ENCODE measurements at regions of chr22 and their contacts with region 1.

Region 1: GRCh38 chr22:21735200-21736076 is at the start of gene YPEL1:
- DNase-seq: peak; percentile 98
- ATAC-seq: peak; percentile 86
- H3K4me3 ChIP-seq: peak within 1 kb of the TSS; percentile 76 to 94 (median 93)
- H3K4me3 Mint-ChIP-seq: peak within 1 kb of the TSS; percentile 88
- H3K27ac ChIP-seq: peak within 1 kb of the TSS; percentile 93 to 94
- H3K27ac Mint-ChIP-seq: peak within 1 kb of the TSS; percentile 97
- H3K4me1 ChIP-seq: peaks cover 21 to 47% of the 10 kb centered on the region in 2 donors
- H3K4me1 Mint-ChIP-seq: peaks cover 40% of the 10 kb centered on the region
- H3K27me3 ChIP-seq: no peaks in the 10 kb centered on the region
- H3K27me3 Mint-ChIP-seq: no peaks in the 10 kb centered on the region
- CTCF ChIP-seq: no peak
- total RNA-seq, gene YPEL1: 14.9 and 17.3 TPM in 2 replicates

Region 2: GRCh38 chr22:20858615-20859416 is 876.6 kb before region 1 on chr22 and contains the starts of genes PI4KA and SNAP29:
- CTCF ChIA-PET with region 1: no interaction called
- POLR2A ChIA-PET with region 1: no interaction called
- intact Hi-C with region 1: loop called (anchors 5 kb)
- DNase-seq: peak; percentile 99
- ATAC-seq: peak; percentile 92
- H3K4me3 ChIP-seq: peak within 1 kb of the TSS; percentile 80 to 94 (median 87)
- H3K4me3 Mint-ChIP-seq: peak within 1 kb of the TSS; percentile 92
- H3K27ac ChIP-seq: peak within 1 kb of the TSS; percentile 76 to 85
- H3K27ac Mint-ChIP-seq: peak within 1 kb of the TSS; percentile 94
- H3K4me1 ChIP-seq: peaks cover 18 to 30% of the 10 kb centered on the region in 2 donors
- H3K4me1 Mint-ChIP-seq: peaks cover 51% of the 10 kb centered on the region
- H3K27me3 ChIP-seq: no peaks in the 10 kb centered on the region
- H3K27me3 Mint-ChIP-seq: no peaks in the 10 kb centered on the region
- CTCF ChIP-seq: no peak
- total RNA-seq, gene PI4KA: 149 and 156 TPM in 2 replicates
- total RNA-seq, gene SNAP29: 17.4 and 18.8 TPM in 2 replicates

Region 3: GRCh38 chr22:21690401-21690801 is 45.0 kb before region 1 on chr22:
- CTCF ChIA-PET with region 1: no interaction called
- POLR2A ChIA-PET with region 1: interaction called, 10 read pairs
- intact Hi-C with region 1: no loop called
- DNase-seq: no peak
- ATAC-seq: no peak
- H3K4me3 ChIP-seq: no peak overlapping the region
- H3K4me3 Mint-ChIP-seq: no peak overlapping the region
- H3K27ac ChIP-seq: peak overlapping the region in 1 of 2 donors; percentile 58
- H3K27ac Mint-ChIP-seq: peak overlapping the region; percentile 26
- H3K4me1 ChIP-seq: peaks cover 0 to 7% of the 10 kb centered on the region in 2 donors
- H3K4me1 Mint-ChIP-seq: peaks cover 13% of the 10 kb centered on the region
- H3K27me3 ChIP-seq: no peaks in the 10 kb centered on the region
- H3K27me3 Mint-ChIP-seq: no peaks in the 10 kb centered on the region
- CTCF ChIP-seq: no peak

Region 4: DNA sequence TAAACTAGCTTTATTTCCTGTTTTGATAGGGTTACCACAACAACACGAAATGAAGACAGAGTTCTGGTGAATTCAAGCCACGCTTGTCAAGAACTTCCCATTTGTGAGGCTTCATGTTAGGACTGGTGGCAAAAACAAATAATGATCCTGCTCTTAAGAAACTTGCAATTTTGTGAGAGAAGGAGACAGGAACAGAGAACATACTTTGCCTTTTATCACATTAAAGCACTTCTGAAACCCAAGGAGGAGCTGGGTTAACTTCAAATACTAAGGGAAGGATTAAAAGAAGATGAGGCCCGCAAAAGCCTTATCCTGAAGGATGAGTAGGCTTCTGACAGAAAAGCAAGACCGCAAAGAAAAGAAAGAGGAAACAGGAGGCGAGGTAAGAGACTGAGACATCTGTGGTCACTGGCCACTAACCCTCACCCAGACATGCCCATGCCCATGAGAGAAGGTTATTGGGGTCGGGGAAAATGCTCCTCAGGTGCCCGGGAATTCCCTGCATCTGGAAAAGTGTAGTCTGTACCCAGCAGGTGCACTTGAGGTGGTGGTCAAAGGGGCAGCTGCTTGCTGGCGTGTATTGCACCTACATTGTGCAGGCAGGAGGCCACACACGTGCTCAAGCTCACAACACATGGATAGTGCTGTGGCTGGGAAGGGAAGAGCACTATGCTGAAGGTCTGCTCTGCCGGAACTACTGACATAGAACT is 81.5 kb after region 1 on chr22:
- CTCF ChIA-PET with region 1: no interaction called
- POLR2A ChIA-PET with region 1: no interaction called
- intact Hi-C with region 1: loop called (anchors 1 kb)
- DNase-seq: peak; percentile 92
- ATAC-seq: peak; percentile 88
- H3K4me3 ChIP-seq: peak overlapping the region; percentile 12 to 54 (median 48)
- H3K4me3 Mint-ChIP-seq: peak overlapping the region; percentile 91
- H3K27ac ChIP-seq: peak overlapping the region; percentile 89 to 96
- H3K27ac Mint-ChIP-seq: peak overlapping the region; percentile 97
- H3K4me1 ChIP-seq: peaks cover 57 to 62% of the 10 kb centered on the region in 2 donors
- H3K4me1 Mint-ChIP-seq: peaks cover 73% of the 10 kb centered on the region
- H3K27me3 ChIP-seq: no peaks in the 10 kb centered on the region
- H3K27me3 Mint-ChIP-seq: no peaks in the 10 kb centered on the region
- CTCF ChIP-seq: no peak

Region 5: DNA sequence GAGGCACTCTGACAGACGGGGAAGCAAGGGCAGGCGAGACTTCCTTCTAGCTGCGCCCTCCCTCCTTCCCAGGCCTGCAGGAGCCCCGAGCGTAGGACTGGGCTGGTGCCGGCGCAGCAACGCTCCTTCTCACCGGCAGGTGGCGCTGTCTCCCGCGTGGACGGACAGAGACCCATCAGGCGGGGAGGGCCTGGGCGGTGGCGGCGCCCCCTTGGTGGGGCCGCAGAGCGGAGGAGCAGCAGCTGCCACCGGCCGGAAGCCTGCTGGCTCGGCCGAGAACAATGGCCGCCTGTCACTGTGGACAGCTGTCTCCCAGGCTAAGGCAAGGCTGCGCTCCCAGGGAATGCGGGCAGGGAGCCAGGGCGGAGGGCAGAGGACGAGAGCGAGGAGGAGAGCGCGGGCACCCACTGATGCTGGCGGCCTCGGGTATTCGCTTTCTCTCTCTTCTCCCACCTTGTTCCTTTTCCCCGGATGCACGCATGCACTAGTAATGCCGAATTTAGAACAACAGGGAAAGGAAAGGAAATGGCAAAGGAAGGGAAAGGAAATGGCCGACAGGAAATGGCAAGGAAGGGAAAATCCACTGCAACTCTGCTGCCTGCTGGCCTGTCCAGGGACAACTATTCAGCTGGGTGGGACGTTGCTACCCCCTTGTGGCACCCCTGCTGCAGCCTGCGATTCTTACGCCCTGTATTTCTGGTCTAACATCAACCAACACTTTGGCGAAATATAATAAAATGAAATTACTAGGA is 202.8 kb after region 1 on chr22:
- CTCF ChIA-PET with region 1: interaction called, 4 read pairs
- POLR2A ChIA-PET with region 1: no interaction called
- intact Hi-C with region 1: loop called (anchors 1 kb)
- DNase-seq: peak; percentile 91
- ATAC-seq: peak; percentile 94
- H3K4me3 ChIP-seq: peak overlapping the region; percentile 44 to 68 (median 61)
- H3K4me3 Mint-ChIP-seq: peak overlapping the region; percentile 91
- H3K27ac ChIP-seq: peak overlapping the region; percentile 16 to 51
- H3K27ac Mint-ChIP-seq: peak overlapping the region; percentile 85
- H3K4me1 ChIP-seq: peaks cover 45 to 55% of the 10 kb centered on the region in 2 donors
- H3K4me1 Mint-ChIP-seq: peaks cover 50% of the 10 kb centered on the region
- H3K27me3 ChIP-seq: no peaks in the 10 kb centered on the region
- H3K27me3 Mint-ChIP-seq: no peaks in the 10 kb centered on the region
- CTCF ChIP-seq: peak; percentile 99

Measured in B cell (primary cell).